ENCODE measurements at regions of chr1 and their contacts with region 1.

Region 1: GRCh38 chr1:64966158-64966971 is at the start of gene JAK1:
- DNase-seq: peak; percentile 96
- total RNA-seq, gene JAK1: 76.4 TPM

Region 2: DNA sequence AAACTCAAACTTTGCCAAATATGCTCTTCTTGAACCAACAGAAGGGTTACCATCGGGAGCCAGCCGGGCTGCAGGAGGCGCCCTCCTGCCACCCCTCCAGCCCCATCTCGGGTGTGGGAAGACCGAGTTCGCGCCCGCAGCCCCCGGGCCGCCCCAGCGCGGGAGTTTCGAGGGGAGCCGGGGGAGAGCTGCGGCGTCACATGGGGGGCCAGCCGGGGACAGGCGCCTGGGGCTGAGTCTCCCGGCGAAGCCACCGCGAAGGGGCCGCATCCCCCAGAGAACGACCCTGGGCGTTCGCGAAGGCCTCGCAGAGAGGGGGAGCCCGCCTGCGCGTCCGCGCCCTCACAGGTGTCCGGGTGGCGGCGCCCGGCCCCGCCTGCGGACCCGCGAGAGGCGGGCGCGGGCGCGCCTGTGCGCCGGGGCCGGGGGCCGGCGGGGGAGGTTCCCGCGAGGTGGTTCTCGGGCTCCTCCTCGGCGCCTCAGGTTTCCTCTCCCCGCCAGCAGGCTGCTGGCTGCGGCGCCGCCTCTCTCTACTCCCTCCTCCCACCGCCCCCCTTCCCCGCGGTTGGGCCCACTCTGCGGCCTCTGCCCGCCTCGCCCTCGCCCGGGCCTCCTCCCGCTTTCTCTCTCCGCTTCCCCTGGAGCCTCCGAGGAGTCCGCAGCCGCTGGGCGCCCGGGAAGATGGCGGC is 221.7 kb before region 1 on chr1 and contains the start of gene RAVER2:
- intact Hi-C with region 1: loop called (anchors 5 kb)
- DNase-seq: peak; percentile 87
- total RNA-seq, gene RAVER2: 12.2 TPM

Region 3: DNA sequence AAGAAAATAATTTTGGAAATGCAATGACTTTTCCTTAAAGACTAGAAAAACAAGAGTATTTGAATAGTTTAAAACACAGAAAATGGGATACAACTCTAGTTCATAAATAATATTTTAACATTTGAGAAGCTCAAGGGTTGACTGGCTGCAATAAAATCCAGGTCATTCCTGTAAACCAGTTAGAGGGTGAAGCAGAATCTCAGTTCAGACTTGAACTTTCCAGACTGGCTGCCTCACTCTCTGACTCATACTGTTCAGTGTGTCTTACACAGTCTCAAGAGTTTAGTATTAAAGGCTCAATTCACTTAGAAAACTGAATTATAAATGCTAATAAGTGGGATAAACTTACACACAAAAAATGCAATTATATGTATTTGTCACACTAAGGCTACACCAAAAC is 131.6 kb before region 1 on chr1:
- intact Hi-C with region 1: no loop called
- DNase-seq: no peak

Region 4: GRCh38 chr1:64898107-64898845 is 68.1 kb before region 1 on chr1:
- intact Hi-C with region 1: loop called (anchors 5 kb)
- DNase-seq: peak; percentile 90

Region 5: DNA sequence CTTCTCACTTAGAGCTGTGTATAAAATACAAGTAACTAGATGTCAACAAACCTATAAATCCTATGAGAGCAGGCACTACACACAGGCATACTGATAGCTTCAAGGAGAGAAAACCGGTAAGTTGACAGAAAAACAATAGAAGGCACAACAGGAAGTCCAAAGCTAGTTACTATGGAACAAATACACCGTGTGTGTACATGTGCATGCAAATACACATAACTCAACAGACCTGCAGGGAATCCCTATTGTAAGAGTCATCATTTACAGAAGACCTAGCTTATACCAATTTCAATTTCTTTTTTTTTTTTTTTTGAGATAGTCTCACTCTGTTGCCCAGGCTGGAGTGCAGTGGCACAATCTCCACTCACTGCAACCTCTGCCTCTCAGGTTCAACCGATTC is 26.3 kb before region 1 on chr1:
- intact Hi-C with region 1: no loop called
- DNase-seq: no peak

Region 6: DNA sequence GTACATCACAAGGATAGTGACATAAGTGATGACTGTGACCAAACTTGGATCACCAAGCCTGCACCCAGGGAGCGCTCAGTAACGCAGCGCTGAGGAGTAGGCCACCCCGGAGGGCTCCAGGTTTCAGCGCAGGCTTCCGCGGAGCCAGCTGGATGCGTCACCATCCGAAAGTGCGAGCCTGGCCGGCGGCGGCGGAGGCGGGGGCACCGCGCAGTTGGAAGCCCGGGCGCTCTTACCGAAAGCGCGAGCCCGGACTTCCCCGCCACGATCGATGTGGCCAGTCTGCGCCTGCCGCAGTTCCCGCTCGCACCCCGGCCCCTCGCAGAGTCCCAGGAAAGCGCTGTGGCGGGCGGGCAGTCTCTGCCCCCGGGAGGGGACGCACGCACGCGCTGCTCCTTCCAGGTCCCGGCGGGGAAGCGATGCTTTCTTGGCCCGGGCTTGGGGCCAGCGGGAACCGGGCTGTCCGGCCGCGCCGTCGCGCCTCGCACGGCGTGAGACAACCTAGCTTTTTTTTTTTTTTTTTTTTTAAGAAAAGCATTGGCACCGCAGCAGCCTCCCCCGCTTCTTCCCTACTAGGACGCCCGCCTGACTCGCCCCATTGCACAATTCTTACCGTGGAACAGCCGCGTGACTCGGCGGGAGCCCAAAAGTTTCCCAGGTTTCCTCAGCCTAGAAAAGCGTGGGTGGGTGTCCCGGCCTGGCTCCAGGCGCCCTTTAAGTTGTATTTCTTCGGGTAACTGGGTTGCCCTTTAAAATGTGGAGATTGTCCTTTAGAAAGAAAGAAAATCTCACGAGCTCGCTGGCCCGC is 36.3 kb after region 1 on chr1:
- intact Hi-C with region 1: loop called (anchors 1 kb)
- DNase-seq: peak; percentile 89

Region 7: DNA sequence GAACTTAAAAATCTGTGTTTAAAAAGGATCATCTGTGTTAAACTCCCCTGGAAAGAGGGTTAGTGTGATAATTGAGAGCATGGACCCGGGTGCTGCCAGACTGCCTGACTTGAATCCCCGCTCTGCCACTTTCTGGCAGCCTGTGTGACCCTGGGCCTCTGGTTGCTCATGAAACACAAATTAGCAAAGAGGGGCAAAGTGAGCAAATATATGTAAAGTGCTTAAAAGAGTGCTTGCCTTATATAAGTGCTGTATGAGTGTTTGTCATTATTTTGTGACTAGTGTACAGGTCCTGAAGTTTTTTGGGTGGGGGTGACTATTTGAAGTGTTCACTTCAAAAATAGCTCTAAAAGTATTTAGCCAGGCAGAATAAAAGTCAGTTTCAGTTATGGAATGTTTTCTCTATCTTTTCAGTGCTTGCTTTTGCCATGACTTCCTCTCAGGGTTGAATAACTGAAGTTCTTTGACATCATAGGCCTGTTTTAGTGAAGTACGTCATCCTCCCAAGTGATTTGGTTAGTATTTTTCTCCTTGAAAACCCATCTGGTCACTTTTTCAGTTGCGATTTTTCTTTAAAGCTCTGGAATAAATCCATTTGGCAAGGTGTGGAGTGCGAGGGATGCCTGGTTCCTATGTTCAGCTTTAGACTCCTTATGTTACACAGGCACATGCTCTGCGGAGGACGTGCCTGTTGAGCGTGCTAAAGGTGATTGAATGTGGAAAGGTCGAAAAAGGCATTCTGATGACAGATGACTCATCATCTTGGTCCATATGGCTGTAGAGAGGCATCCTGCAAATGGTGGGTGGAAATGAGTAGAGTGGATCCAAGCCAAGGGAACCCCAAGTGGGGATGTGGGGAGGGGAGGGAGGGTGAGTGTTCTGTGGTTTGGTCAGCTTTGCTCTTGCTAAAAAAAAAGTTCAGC is 229.4 kb after region 1 on chr1:
- intact Hi-C with region 1: no loop called
- DNase-seq: no peak